H1 (cell line): ENCODE measurements at regions of chr15 and their contacts with region 1.

Region 1: GRCh38 chr15:99275525-99276128 is 24.3 kb downstream of the LRRC28 start:
- DNase-seq: no peak
- H3K4me3 ChIP-seq: no peak overlapping the region
- H3K27ac ChIP-seq: no peak overlapping the region
- H3K4me1 ChIP-seq: peaks cover 0 to 6% (median 3%) of the 10 kb centered on the region in 4 experiments; a peak in 2 of 7 replicates
- H3K27me3 ChIP-seq: no peaks in the 10 kb centered on the region
- CTCF ChIP-seq: no peak
- EP300 ChIP-seq: no peak
- POLR2A ChIP-seq: no peak
- RAD21 ChIP-seq: no peak

Region 2: GRCh38 chr15:99155961-99156450 is 119.6 kb before region 1 on chr15:
- CTCF ChIA-PET with region 1: no interaction called
- POLR2A ChIA-PET with region 1: no interaction called
- DNase-seq: no peak
- H3K4me3 ChIP-seq: no peak overlapping the region
- H3K27ac ChIP-seq: no peak overlapping the region
- H3K4me1 ChIP-seq: peaks cover 0 to 4% (median 3%) of the 10 kb centered on the region in 4 experiments; a peak in 4 of 7 replicates
- H3K27me3 ChIP-seq: no peaks in the 10 kb centered on the region
- CTCF ChIP-seq: no peak
- EP300 ChIP-seq: no peak
- POLR2A ChIP-seq: no peak
- RAD21 ChIP-seq: no peak

Region 3: GRCh38 chr15:99167640-99168039 is 108.0 kb before region 1 on chr15:
- CTCF ChIA-PET with region 1: no interaction called
- POLR2A ChIA-PET with region 1: no interaction called
- DNase-seq: no peak
- H3K4me3 ChIP-seq: no peak overlapping the region
- H3K27ac ChIP-seq: no peak overlapping the region
- H3K4me1 ChIP-seq: no peaks in the 10 kb centered on the region
- H3K27me3 ChIP-seq: no peaks in the 10 kb centered on the region
- CTCF ChIP-seq: no peak
- EP300 ChIP-seq: no peak
- POLR2A ChIP-seq: no peak
- RAD21 ChIP-seq: no peak

Region 4: GRCh38 chr15:99264125-99264524 is 11.5 kb before region 1 on chr15:
- CTCF ChIA-PET with region 1: interaction called, 17 read pairs
- POLR2A ChIA-PET with region 1: interaction called, 3 read pairs
- DNase-seq: no peak
- H3K4me3 ChIP-seq: no peak overlapping the region
- H3K27ac ChIP-seq: no peak overlapping the region
- H3K4me1 ChIP-seq: no peaks in the 10 kb centered on the region
- H3K27me3 ChIP-seq: no peaks in the 10 kb centered on the region
- CTCF ChIP-seq: no peak
- EP300 ChIP-seq: no peak
- POLR2A ChIP-seq: no peak
- RAD21 ChIP-seq: no peak

Region 5: GRCh38 chr15:99343881-99344551 is 68.4 kb after region 1 on chr15:
- CTCF ChIA-PET with region 1: interaction called, 10 read pairs
- POLR2A ChIA-PET with region 1: no interaction called
- DNase-seq: peak; percentile 21 to 65
- H3K4me3 ChIP-seq: no peak overlapping the region
- H3K27ac ChIP-seq: no peak overlapping the region
- H3K4me1 ChIP-seq: no peaks in the 10 kb centered on the region
- H3K27me3 ChIP-seq: no peaks in the 10 kb centered on the region
- CTCF ChIP-seq: peak; percentile 72 to 91 (median 91)
- EP300 ChIP-seq: no peak
- POLR2A ChIP-seq: no peak
- RAD21 ChIP-seq: peak; percentile 70 to 77

Region 6: DNA sequence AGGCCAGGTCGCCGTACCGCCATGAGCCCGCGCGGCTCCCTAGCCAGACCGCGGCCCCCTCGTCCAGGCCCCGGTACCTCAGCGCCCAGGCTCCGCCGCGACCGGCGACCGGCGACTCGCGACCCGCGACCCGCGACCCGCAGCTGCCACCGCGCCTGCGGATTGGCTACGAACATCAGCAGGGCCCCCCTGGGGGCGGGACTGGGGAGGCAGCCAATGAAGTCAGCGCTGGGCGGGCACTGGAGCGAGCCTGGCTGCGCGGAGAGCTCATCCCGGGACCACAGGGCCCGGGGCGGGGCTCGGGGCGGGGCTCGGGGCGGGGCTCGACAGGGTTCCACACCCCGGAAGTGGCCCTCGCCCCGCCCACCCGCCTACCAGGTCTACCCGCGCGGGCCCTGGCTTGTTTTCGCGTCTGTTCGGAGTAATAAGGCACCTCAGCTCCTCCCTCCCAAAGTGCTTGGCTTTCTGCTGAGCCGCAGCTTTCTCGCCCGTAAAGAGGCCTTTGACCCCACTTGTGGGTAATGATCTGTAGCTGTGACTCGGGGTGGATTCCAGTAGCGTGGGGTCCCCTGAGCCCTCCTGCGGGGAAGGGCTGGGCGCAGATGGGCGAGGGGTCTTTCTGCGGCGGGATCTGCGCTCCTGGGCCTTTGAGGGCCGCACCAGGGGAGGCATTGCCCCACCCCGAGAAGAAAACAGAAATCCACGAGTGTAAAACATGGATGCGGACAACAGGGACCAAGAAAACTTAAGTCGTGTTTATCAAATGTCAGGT is 457.8 kb after region 1 on chr15 and contains the start of gene LYSMD4:
- CTCF ChIA-PET with region 1: interaction called, 15 read pairs
- POLR2A ChIA-PET with region 1: no interaction called
- DNase-seq: peak; percentile 85 to 97
- H3K4me3 ChIP-seq: peak within 1 kb of the TSS; percentile 70 to 88 (median 75)
- H3K27ac ChIP-seq: peak within 1 kb of the TSS; percentile 83
- H3K4me1 ChIP-seq: peaks cover 2 to 23% (median 6%) of the 10 kb centered on the region in 4 experiments; a peak in 5 of 7 replicates
- H3K27me3 ChIP-seq: peaks cover 0 to 10% (median 3%) of the 10 kb centered on the region in 4 experiments; a peak in 4 of 7 replicates
- CTCF ChIP-seq: no peak
- EP300 ChIP-seq: no peak
- POLR2A ChIP-seq: peak in 1 of 2 experiments; percentile 81; a peak in 2 of 3 replicates
- RAD21 ChIP-seq: no peak
- total RNA-seq, gene LYSMD4: 16.0 and 17.5 TPM in 2 replicates

Region 7: GRCh38 chr15:99755692-99756409 is 480.2 kb after region 1 on chr15:
- CTCF ChIA-PET with region 1: interaction called, 22 read pairs
- POLR2A ChIA-PET with region 1: no interaction called
- DNase-seq: peak in 1 of 2 experiments; percentile 49
- H3K4me3 ChIP-seq: no peak overlapping the region
- H3K27ac ChIP-seq: no peak overlapping the region
- H3K4me1 ChIP-seq: no peaks in the 10 kb centered on the region
- H3K27me3 ChIP-seq: peaks cover 0 to 10% (median 0%) of the 10 kb centered on the region in 4 experiments; a peak in 2 of 7 replicates
- CTCF ChIP-seq: peak; percentile 30 to 74 (median 71)
- EP300 ChIP-seq: no peak
- POLR2A ChIP-seq: no peak
- RAD21 ChIP-seq: peak; percentile 85 to 87